Activated T-helper 1 cell treated with anti-CD3 and anti-CD28 coated beads, Interleukin-12 subunit alpha, Interleukin-12 subunit beta, Interleukin-2, Interleukin-4 antibody, amounts not matched to agents 30 ng/mL and 10 ng/mL and 1 ng/mL, durations not matched to agents 14 hours and 24 hours and 36 hours (primary cell): ENCODE measurements at regions of chr7 and their contacts with region 1.

Region 1: GRCh38 chr7:141737834-141738591 is at the start of gene SSBP1:
- DNase-seq: peak; percentile 91
- H3K4me3 Mint-ChIP-seq: peak within 1 kb of the TSS; percentile 94
- H3K27ac Mint-ChIP-seq: peak within 1 kb of the TSS; percentile 96
- H3K4me1 Mint-ChIP-seq: peaks cover 24% of the 10 kb centered on the region
- H3K27me3 Mint-ChIP-seq: no peaks in the 10 kb centered on the region
- total RNA-seq, gene SSBP1: 240 and 245 TPM in 2 replicates

Region 2: DNA sequence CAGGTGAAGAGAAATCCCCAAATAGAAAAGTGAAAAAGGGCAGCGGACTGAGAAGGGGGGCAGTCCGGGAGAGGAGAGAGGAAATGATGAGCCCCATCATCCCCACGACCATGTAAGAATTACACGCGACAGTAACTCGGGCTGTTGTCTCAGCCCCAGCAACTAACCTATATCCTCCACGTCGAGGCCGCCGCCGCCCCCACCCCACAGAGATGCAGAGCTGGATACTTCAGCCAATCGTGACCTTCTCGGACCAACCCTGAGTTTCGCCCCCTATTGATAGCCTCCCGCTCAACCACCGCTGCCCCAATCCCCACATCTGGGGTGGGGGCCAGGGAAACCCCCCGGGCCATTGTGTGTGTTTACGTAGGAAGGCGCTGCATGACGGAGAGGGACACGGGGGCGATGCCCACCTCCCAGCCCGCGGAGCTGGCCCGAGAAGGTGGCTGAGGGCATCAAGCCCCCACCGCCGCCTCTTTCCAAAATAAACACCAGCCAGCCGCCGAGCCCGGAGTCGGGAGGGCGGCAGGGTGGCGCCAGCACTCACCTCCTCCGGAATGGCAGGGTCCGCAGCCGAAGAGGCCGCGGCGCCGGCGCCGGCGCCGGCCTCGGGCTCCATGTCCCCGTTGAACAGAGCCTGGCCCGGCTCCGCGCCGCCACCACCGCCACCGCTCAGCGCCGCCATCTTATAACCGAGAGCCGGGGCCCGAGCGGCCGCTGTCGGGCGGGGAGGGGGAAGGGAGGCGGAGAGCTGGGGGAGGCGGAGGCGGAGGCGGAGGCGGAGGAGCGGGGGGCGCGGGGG is 813.8 kb before region 1 on chr7:
- intact Hi-C with region 1: loop called (anchors 2 kb)
- DNase-seq: peak; percentile 69
- H3K4me3 Mint-ChIP-seq: no peak overlapping the region
- H3K27ac Mint-ChIP-seq: no peak overlapping the region
- H3K4me1 Mint-ChIP-seq: peaks cover 11% of the 10 kb centered on the region
- H3K27me3 Mint-ChIP-seq: no peaks in the 10 kb centered on the region

Region 3: DNA sequence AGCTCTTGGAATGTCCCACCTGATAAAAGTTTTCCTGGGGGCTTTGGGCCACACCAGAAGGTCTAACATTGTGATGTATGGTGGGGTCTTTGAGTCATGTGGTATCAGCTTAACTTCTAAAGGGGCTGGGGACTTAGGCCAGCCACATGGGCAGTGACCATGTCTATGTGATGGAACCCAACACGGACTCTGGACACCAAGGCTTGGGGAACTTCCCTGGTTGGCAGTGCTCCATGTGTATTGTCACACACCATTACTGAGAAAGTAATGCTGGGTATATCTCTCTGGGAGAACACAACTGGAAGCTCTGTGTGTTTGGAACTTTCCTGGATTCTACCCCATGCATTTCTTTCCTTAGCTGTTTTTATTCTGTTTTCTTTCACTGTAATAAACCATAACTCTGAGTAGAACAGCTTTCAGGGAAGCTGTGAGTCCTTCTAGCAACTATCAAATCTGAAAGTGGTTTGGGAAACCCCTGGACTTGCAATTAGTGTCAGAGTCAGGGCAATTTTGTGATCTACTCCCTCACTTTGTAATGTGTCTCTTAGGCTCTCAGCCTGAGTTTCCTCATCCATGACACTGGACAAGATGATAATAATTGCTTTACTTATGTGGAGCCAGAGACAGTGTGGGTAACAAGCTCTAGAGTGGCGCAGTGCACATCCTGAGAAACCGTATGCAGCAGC is 215.2 kb before region 1 on chr7:
- intact Hi-C with region 1: no loop called
- DNase-seq: no peak
- H3K4me3 Mint-ChIP-seq: no peak overlapping the region
- H3K27ac Mint-ChIP-seq: no peak overlapping the region
- H3K4me1 Mint-ChIP-seq: peaks cover 5% of the 10 kb centered on the region
- H3K27me3 Mint-ChIP-seq: peaks cover 14% of the 10 kb centered on the region

Region 4: GRCh38 chr7:141551094-141551781 is 186.8 kb before region 1 on chr7 and contains the start of gene AGK:
- intact Hi-C with region 1: loop called (anchors 1 kb)
- DNase-seq: peak; percentile 79
- H3K4me3 Mint-ChIP-seq: peak within 1 kb of the TSS; percentile 91
- H3K27ac Mint-ChIP-seq: peak within 1 kb of the TSS; percentile 97
- H3K4me1 Mint-ChIP-seq: peaks cover 50% of the 10 kb centered on the region
- H3K27me3 Mint-ChIP-seq: no peaks in the 10 kb centered on the region
- total RNA-seq, gene AGK: 174 and 179 TPM in 2 replicates

Region 5: DNA sequence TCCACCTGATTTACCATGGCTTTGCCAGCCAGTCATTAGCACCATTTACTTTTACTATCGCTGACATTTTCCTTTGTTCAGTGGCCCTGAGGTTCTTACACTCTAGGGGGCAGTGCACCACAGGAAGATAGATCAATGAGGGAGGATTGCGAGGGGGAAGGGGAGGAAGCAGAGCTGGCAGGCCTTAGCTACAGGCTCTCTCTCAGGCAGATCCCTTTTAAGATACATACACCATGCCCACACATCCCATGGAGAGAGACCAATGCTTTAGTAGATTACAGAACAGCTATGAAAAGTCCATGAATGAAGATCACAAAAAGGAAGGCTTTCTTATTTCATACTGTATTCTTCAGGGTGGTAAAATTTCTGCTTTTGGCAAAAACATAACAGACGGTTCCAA is 83.5 kb before region 1 on chr7:
- intact Hi-C with region 1: loop called (anchors 1 kb)
- DNase-seq: peak; percentile 52
- H3K4me3 Mint-ChIP-seq: no peak overlapping the region
- H3K27ac Mint-ChIP-seq: peak overlapping the region; percentile 69
- H3K4me1 Mint-ChIP-seq: peaks cover 15% of the 10 kb centered on the region
- H3K27me3 Mint-ChIP-seq: no peaks in the 10 kb centered on the region

Region 6: DNA sequence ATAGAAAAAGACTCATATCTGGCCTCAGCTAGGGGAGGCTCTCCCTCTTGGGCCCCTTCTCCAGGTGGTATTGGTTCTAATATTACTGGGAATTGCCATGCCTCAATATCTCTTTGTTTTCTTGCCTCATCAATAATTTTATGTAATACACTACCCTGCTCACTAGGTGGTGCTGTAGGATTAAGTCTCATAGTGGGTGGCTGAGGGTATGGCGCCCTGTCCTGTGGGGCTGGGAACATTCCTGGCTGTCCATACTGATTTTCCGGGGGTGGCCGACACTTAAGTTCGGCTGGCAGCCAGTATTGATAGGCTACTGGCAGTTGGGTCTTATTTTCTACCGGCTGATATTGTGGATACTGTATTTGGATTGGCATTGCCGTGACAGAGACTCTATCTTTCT is 16.9 kb after region 1 on chr7:
- intact Hi-C with region 1: loop called (anchors 1 kb)
- DNase-seq: no peak
- H3K4me3 Mint-ChIP-seq: no peak overlapping the region
- H3K27ac Mint-ChIP-seq: no peak overlapping the region
- H3K4me1 Mint-ChIP-seq: peaks cover 10% of the 10 kb centered on the region
- H3K27me3 Mint-ChIP-seq: no peaks in the 10 kb centered on the region

Region 7: DNA sequence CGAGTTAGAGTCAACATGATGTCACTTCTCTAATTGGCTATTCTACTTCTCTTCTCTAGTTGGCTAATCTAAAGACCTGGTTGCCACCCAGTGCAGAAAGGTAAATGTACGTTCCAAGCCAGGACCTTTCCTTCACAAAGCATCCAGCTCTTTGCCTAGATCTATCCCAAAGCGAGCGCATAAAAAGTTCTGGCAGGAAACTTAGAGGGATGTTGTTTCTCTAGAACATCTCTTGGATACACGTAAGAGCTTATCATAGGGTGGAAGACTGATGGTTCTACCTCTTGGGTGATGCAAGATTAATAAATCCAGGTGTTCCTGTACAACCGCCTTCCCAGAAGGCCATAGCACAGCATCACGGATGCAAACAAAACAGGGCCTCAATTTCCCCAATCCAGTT is 235.7 kb after region 1 on chr7 and contains the start of gene TAS2R38:
- intact Hi-C with region 1: no loop called
- DNase-seq: no peak
- H3K4me3 Mint-ChIP-seq: no peak within 1 kb of the TSS
- H3K27ac Mint-ChIP-seq: no peak within 1 kb of the TSS
- H3K4me1 Mint-ChIP-seq: peaks cover 12% of the 10 kb centered on the region
- H3K27me3 Mint-ChIP-seq: no peaks in the 10 kb centered on the region
- total RNA-seq, gene TAS2R38: not detected in 2 replicates